Activated CD8-positive, alpha-beta memory T cell treated with anti-CD3 and anti-CD28 coated beads, Interleukin-2, amount 10 ng/mL, durations not matched to agents 7 days and 5 days (primary cell): ENCODE measurements at regions of chr2 and their contacts with region 1.

Region 1: GRCh38 chr2:215979662-215980061 is 33.7 kb downstream of the MREG start:
- DNase-seq: no peak
- ATAC-seq: peak; percentile 90
- H3K4me3 Mint-ChIP-seq: peak overlapping the region; percentile 14
- H3K27ac Mint-ChIP-seq: peak overlapping the region; percentile 70
- H3K4me1 Mint-ChIP-seq: peaks cover 83% of the 10 kb centered on the region
- H3K27me3 Mint-ChIP-seq: no peaks in the 10 kb centered on the region

Region 2: GRCh38 chr2:215994901-215995300 is 15.2 kb after region 1 on chr2:
- CTCF ChIA-PET with region 1: no interaction called
- DNase-seq: no peak
- ATAC-seq: no peak
- H3K4me3 Mint-ChIP-seq: no peak overlapping the region
- H3K27ac Mint-ChIP-seq: no peak overlapping the region
- H3K4me1 Mint-ChIP-seq: peaks cover 6% of the 10 kb centered on the region
- H3K27me3 Mint-ChIP-seq: no peaks in the 10 kb centered on the region

Region 3: DNA sequence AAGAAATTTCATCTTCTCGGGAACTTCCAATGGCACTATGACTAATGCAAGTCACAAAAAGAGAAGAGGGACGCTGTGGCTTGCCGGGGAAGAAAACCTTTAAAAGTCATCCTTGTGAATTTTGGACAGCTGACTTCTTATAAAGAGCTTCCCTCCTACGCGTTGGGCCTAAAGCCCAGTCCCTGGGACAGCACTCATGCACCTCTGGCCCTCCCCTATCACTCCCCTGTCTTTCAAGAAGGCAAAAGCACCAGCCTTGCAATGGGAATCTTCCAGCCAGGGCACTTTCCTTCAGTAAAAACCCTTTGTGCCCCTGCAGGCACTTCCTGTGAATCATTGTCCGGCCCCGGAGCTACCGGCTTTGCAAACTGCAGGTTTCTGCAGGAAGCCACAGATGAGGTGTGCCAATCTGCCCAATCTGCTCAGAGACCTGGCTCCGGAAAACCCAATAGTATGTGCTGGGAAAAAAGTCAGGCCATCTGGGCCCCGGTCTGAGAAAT is 26.6 kb after region 1 on chr2:
- CTCF ChIA-PET with region 1: interaction called, 10 read pairs
- DNase-seq: peak; percentile 80
- ATAC-seq: peak; percentile 75
- H3K4me3 Mint-ChIP-seq: peak overlapping the region; percentile 45
- H3K27ac Mint-ChIP-seq: peak overlapping the region; percentile 90
- H3K4me1 Mint-ChIP-seq: peaks cover 64% of the 10 kb centered on the region
- H3K27me3 Mint-ChIP-seq: no peaks in the 10 kb centered on the region